ENCODE measurements at regions of chr19 and their contacts with region 1.

Region 1: GRCh38 chr19:48255376-48256303 is at the start of gene CARD8:
- DNase-seq: peak; percentile 63

Region 2: DNA sequence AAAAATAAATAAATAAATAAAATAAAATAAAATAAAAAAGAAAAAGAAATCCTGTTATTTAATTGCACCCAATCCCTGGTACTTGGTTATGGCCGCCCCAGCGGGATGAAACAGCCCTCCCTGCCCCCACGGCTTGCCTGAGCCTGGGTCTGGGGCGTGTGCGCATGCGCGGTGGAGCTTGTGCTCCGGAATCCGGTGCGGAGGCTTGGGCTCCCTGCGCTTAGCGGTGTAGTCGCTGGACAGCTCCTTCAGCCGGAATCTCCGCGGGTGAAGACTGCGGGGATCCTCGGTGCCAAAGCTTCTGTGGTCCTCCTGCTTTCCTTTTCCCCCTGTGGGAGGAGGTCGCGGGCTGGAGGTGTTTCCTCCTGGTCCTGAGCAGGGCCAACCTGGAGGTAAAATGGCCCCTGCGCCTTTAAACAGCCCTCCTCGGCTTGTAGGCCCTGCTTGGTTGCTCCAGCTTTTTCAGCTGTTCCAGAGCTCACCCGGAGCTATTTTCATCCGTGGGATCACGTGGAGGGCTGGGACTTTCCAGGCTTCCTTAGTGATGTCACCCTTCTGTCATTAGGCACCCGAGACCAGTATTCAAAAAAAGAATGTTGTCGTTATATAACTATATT is 145.2 kb before region 1 on chr19 and contains the start of gene PLA2G4C:
- CTCF ChIA-PET with region 1: no interaction called
- POLR2A ChIA-PET with region 1: interaction called, 13 read pairs
- DNase-seq: peak; percentile 93

Measured in HEK293T (cell line).